ENCODE measurements at regions of chr20 and their contacts with region 1.

Region 1: DNA sequence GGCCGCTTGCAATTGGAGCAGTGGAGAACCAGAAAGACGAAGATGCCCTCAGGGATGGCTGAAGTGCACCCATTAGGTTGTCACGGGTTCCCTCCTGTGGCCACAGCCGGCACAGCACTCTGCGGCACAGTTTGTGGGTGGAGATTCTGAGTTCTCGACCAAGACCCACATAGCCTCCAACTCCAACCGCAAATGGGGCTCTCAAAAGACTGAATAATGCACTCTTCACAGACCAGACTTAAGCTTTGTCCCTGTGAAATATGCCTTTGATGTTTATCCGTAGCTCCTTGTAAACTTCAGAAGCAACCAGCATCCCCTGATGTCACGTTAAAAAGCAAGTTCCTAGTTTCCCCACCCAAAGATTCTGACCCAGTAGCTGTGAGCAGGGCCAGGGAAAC is 934 bp upstream of the CST9 start:
- DNase-seq: peak; percentile 15 to 63 (median 39)
- ATAC-seq: peak; percentile 86
- H3K4me3 ChIP-seq: no peak overlapping the region
- H3K4me3 Mint-ChIP-seq: no peak overlapping the region
- H3K27ac ChIP-seq: no peak overlapping the region
- H3K27ac Mint-ChIP-seq: no peak overlapping the region
- H3K4me1 ChIP-seq: no peaks in the 10 kb centered on the region
- H3K4me1 Mint-ChIP-seq: peaks cover 0 to 4% (median 0%) of the 10 kb centered on the region in 7 donors
- H3K27me3 ChIP-seq: no peaks in the 10 kb centered on the region
- H3K27me3 Mint-ChIP-seq: peaks cover 4 to 7% (median 5%) of the 10 kb centered on the region in 5 donors

Region 2: GRCh38 chr20:23357767-23358591 is 248.7 kb before region 1 on chr20:
- CTCF ChIA-PET with region 1: no interaction called
- POLR2A ChIA-PET with region 1: no interaction called
- intact Hi-C with region 1: no loop called
- DNase-seq: peak; percentile 97 to 99 (median 98)
- ATAC-seq: peak; percentile 81
- H3K4me3 ChIP-seq: peak overlapping the region; percentile 85
- H3K4me3 Mint-ChIP-seq: peak overlapping the region; percentile 91 to 95 (median 93)
- H3K27ac ChIP-seq: peak overlapping the region; percentile 92
- H3K27ac Mint-ChIP-seq: peak overlapping the region; percentile 94 to 98 (median 97)
- H3K4me1 ChIP-seq: peaks cover 14 to 22% of the 10 kb centered on the region in 2 donors
- H3K4me1 Mint-ChIP-seq: peaks cover 17 to 38% (median 34%) of the 10 kb centered on the region in 7 donors
- H3K27me3 ChIP-seq: no peaks in the 10 kb centered on the region
- H3K27me3 Mint-ChIP-seq: peaks cover 0 to 4% (median 0%) of the 10 kb centered on the region in 5 donors

Region 3: GRCh38 chr20:23441850-23442313 is 164.8 kb before region 1 on chr20:
- CTCF ChIA-PET with region 1: no interaction called
- POLR2A ChIA-PET with region 1: no interaction called
- intact Hi-C with region 1: loop called in 1 of 2 experiments (anchors 1 kb)
- DNase-seq: peak in 8 of 9 donors; percentile 15 to 49 (median 29)
- ATAC-seq: peak; percentile 81
- H3K4me3 ChIP-seq: no peak overlapping the region
- H3K4me3 Mint-ChIP-seq: no peak overlapping the region
- H3K27ac ChIP-seq: no peak overlapping the region
- H3K27ac Mint-ChIP-seq: no peak overlapping the region
- H3K4me1 ChIP-seq: no peaks in the 10 kb centered on the region
- H3K4me1 Mint-ChIP-seq: peaks cover 0 to 4% (median 0%) of the 10 kb centered on the region in 7 donors
- H3K27me3 ChIP-seq: no peaks in the 10 kb centered on the region
- H3K27me3 Mint-ChIP-seq: peaks cover 0 to 2% (median 0%) of the 10 kb centered on the region in 5 donors

Region 4: DNA sequence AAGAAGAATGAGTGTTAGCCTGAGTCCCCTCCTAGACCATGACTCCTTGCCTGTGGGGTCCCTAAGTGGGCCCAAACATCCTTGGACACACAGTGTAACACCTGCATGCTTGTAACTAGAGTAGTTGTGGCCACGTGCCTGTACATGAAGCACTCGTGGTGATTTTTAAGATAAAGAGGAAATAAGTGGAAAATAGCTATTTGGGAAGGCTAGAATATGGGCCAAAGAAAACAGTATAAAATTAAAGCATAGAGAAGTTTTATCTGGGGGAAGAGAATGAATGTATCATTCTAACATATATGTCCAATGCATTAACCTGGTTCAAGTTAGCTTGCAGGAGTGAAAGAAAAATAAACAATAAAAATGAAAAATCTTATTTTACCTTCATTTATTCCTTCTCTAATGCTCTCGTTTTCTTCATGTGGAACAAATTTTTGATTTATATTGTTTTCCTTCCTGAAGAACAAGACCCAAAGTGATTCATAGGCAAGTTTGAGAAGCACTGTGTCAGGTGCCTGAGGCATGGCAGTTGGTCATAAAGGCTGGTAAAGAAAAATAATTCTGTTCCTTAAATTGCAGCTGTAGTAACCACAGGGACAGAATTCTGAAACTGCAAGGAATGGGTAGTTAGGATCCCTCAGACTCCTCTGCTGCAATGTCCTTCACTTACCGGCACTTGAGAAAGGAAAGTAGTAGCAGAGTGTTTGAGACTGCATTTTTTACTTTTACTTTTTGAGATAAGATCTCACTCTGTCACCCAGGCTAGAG is 39.6 kb after region 1 on chr20:
- CTCF ChIA-PET with region 1: no interaction called
- POLR2A ChIA-PET with region 1: no interaction called
- intact Hi-C with region 1: no loop called
- DNase-seq: no peak
- ATAC-seq: no peak
- H3K4me3 ChIP-seq: no peak overlapping the region
- H3K4me3 Mint-ChIP-seq: no peak overlapping the region
- H3K27ac ChIP-seq: no peak overlapping the region
- H3K27ac Mint-ChIP-seq: no peak overlapping the region
- H3K4me1 ChIP-seq: no peaks in the 10 kb centered on the region
- H3K4me1 Mint-ChIP-seq: peaks cover 0 to 2% (median 0%) of the 10 kb centered on the region in 7 donors
- H3K27me3 ChIP-seq: no peaks in the 10 kb centered on the region
- H3K27me3 Mint-ChIP-seq: peaks cover 0 to 4% (median 0%) of the 10 kb centered on the region in 5 donors

Measured in naive thymus-derived CD4-positive, alpha-beta T cell (primary cell).